Mammary epithelial cell (primary cell): ENCODE measurements at regions of chr2 and their contacts with region 1.

Region 1: DNA sequence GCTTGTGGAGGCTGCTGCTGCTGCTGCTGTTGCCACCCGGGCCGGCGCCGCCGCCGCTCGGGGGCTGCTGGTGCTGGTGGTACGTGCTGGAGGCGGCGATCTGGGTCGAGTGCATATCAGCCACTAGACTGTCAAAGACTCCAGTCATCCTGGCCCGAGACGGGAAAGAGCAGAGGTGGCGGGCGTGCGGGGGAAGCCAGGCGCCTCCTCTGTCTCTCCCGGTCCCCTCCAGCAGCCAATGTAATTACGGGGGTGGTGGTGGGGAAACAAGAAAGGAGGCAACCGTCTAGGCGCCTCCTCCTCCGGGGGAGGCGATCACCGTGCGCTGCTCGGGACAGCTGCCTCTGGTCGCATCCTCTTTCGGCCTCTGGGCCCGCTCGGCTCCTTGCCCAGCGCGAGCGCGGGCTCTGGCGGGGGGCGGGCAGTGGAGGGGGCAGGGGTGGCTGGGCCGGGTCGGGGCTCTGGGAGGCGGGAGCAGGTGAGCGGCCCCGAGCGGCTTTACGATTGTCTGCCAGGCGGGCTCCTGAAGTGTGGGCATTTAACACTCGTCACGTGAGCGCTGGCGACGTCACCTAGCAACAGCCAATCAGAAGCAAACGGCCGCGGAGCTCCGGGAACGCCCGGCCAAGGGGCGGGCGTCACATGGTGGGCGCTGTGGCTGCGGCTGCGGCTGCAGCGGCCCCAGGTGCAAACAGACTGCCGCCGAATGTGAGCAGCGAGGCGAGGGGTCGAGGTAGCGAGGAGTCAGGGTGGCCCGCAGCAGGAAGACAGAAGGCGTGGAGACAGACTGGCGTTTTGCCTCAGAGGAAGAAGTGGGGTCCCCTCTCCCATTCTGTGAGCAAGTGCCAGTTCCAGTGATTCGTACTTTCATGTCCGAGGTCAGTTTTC is at the start of gene DLX2:
- DNase-seq: peak; percentile 84
- H3K4me3 ChIP-seq: peak within 1 kb of the TSS; percentile 49 to 73 (median 57)
- H3K27ac ChIP-seq: peak within 1 kb of the TSS; percentile 23
- H3K4me1 ChIP-seq: peaks cover 42% of the 10 kb centered on the region
- H3K27me3 ChIP-seq: no peaks in the 10 kb centered on the region
- CTCF ChIP-seq: no peak
- total RNA-seq, gene DLX2: under 0.01 to 9.9 TPM

Region 2: DNA sequence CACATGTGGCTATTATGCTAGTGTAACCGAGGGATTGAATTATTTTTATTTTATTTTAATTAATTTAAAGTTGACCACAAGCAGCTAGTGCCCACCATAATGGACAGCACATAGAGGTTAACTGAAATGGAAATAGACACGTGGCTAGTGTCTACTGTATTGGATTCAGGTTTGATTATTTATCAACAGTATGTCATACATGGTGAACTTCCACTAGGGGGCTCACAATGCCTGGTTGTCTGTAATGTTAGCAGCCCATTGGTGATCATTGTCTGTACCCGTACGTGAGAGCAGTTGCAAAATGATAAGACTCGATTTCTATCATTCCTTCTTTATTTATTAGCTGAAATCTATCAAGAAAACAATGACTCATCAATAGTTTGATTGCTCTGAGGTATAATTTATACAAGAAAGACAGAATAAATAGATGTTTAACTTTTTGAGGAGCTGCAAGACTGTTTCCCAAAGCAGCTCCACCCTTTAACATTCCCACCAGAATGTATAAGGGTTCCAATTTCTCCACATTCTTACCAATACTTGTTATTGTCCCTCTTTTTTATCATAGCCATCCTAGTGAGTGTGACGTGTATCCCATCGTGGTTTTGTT is 503.8 kb before region 1 on chr2:
- CTCF ChIA-PET with region 1: no interaction called
- dilution Hi-C with region 1: no loop called
- in situ Hi-C with region 1: loop called in 1 of 2 experiments (anchors 25 kb)
- intact Hi-C with region 1: loop called (anchors 5 kb)
- DNase-seq: peak; percentile 51
- H3K4me3 ChIP-seq: no peak overlapping the region
- H3K27ac ChIP-seq: no peak overlapping the region
- H3K4me1 ChIP-seq: peaks cover 21% of the 10 kb centered on the region
- H3K27me3 ChIP-seq: no peaks in the 10 kb centered on the region
- CTCF ChIP-seq: peak; percentile 85 to 92

Region 3: DNA sequence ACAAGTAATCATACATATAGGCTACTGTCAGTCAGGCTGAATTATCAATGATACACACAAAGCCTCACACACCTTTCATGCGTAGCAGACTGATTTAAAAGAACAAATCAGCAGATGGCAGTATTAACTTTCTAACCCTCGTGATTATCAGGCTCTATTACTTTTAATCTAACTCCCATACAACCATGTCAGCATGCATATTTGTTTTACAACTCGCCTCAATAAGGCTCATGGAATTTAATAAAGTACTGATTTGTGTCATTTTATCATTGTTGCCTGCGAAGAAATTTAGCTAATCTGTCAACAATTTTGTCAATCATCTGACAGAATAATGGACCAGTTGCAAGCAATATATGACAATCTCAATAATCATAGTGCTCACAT is 291.4 kb before region 1 on chr2:
- CTCF ChIA-PET with region 1: no interaction called
- dilution Hi-C with region 1: no loop called
- in situ Hi-C with region 1: loop called (anchors 25 kb)
- intact Hi-C with region 1: loop called (anchors 1 kb)
- DNase-seq: peak; percentile 20
- H3K4me3 ChIP-seq: no peak overlapping the region
- H3K27ac ChIP-seq: no peak overlapping the region
- H3K4me1 ChIP-seq: peaks cover 15% of the 10 kb centered on the region
- H3K27me3 ChIP-seq: no peaks in the 10 kb centered on the region
- CTCF ChIP-seq: peak; percentile 32 to 46

Region 4: GRCh38 chr2:171941318-171941699 is 161.3 kb before region 1 on chr2:
- CTCF ChIA-PET with region 1: no interaction called
- dilution Hi-C with region 1: no loop called
- in situ Hi-C with region 1: no loop called
- intact Hi-C with region 1: loop called (anchors 1 kb)
- DNase-seq: no peak
- H3K4me3 ChIP-seq: no peak overlapping the region
- H3K27ac ChIP-seq: no peak overlapping the region
- H3K4me1 ChIP-seq: no peaks in the 10 kb centered on the region
- H3K27me3 ChIP-seq: no peaks in the 10 kb centered on the region
- CTCF ChIP-seq: no peak

Region 5: DNA sequence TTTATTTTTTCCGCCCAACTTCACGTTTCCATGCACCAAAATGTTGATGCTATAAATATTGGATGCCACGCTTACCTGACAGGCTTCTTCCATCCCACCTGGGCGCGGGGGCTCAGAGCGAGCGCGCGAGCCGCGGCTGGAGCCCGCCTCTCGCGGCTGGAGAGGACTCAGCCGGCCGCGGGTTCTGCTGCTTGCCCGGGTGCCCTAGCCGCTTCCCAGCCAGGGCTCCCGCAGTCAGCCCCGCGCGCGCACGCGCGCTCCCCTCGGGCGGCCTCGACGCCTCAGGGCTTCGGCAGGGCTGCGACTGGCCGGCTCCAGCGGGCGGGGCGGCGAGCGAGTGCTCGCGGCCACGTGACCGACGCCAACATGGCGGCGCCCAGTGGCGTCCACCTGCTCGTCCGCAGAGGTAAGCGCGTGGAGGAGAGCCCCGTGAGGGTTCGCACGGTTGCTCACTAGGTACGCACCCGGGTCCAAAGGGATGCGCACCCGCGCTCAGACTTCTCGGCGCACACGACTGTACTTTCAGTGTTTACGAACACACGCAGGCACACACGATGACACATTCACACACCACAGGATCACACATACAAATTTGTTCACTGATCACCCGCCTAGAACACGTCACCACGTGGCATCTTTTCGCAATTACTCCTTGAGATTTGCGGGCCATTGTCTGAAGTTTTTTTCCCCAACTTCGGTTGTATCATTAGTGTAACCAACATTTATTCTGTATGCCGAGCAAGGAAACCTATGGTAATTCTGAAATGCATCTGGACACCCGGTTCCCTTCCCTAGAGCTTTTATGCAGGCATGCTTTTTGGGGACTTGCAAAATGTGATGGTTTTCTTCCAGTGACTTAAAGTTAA is 102.8 kb before region 1 on chr2 and contains the start of gene METAP1D:
- CTCF ChIA-PET with region 1: no interaction called
- dilution Hi-C with region 1: no loop called
- in situ Hi-C with region 1: loop called in 1 of 2 experiments (anchors 5 kb)
- intact Hi-C with region 1: loop called (anchors 1 kb)
- DNase-seq: peak; percentile 87
- H3K4me3 ChIP-seq: peak within 1 kb of the TSS; percentile 67 to 91 (median 86)
- H3K27ac ChIP-seq: peak within 1 kb of the TSS; percentile 89
- H3K4me1 ChIP-seq: peaks cover 17% of the 10 kb centered on the region
- H3K27me3 ChIP-seq: no peaks in the 10 kb centered on the region
- CTCF ChIP-seq: no peak
- total RNA-seq, gene METAP1D: 3.3 to 4.7 TPM

Region 6: DNA sequence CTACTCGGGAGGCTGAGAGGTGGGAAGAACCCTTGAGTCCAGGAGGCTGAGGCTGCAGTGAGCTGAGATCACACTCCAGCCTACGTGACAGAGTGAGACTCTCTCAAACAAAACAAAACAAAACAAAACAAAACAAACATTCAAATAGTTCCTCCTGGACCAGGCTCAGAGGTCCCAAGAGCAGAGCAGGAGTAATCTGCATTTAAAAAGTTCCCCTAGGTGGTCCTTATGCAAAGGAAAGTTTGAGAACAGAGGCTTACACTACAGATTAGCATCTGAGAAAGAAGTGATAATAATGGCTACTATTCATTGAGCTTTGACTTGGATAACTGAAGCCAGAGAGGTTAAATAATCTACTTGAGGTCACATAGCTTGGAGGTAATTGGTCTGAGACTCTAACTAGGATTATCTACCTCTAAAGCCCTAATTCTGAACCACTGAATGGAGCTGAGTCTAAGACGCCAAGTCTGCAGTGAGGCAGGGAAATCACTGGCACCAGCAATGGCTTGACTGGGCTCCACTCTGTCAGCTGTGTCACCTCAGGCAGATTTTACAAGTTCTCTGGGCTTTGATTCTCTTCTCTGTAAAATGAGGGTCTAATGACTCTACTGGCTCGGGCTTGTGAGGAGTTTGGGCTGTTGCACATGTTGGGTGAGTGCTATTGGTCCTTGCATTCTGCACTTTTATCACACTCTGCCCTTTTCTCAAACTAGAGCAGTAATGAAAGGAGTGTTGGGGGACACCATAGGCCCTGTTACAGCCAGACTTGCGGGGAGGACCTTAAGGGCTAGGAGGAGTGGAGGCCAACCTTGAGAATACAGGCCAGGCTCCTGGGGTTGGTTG is 29.3 kb after region 1 on chr2:
- CTCF ChIA-PET with region 1: no interaction called
- dilution Hi-C with region 1: no loop called
- in situ Hi-C with region 1: no loop called
- intact Hi-C with region 1: loop called (anchors 1 kb)
- DNase-seq: no peak
- H3K4me3 ChIP-seq: no peak overlapping the region
- H3K27ac ChIP-seq: no peak overlapping the region
- H3K4me1 ChIP-seq: no peaks in the 10 kb centered on the region
- H3K27me3 ChIP-seq: no peaks in the 10 kb centered on the region
- CTCF ChIP-seq: no peak